CD8-positive, alpha-beta T cell (primary cell): ENCODE measurements at regions of chr17 and their contacts with region 1.

Region 1: DNA sequence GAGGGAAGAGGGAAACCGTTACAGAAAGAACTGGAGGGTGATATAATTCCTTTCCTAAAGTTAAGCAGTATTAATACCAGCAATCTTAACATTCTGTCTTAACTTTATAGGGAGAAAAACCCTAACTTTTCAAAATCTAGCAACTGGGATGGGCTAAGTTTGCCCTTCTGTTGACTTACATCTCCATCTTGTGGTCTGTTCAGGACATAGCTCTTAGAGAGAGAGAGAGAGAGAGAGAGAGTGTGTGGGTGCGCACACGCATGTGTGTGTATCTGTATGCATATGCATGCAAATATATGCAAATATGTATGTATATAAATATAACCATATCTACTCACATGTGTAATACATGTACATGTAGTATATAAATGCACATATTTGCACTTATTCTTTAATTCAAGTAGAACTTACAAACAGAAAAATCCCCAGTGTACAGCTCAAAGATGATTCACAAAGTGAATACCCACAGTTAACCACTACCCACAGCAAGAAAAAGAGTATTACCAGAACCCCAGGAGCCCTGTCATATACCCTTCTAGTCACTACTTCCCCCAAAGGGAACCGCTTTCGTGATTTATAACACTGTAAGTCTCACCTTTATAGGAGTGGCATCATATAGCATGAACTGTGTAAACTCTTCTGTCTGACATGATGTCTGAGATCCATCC is 46.5 kb downstream of the STX8 start:
- DNase-seq: peak in 2 of 9 experiments; percentile 16 to 33
- ATAC-seq: no peak
- H3K4me3 ChIP-seq: no peak overlapping the region
- H3K4me3 Mint-ChIP-seq: no peak overlapping the region
- H3K27ac ChIP-seq: no peak overlapping the region
- H3K27ac Mint-ChIP-seq: no peak overlapping the region
- H3K4me1 ChIP-seq: no peaks in the 10 kb centered on the region
- H3K4me1 Mint-ChIP-seq: no peaks in the 10 kb centered on the region
- H3K27me3 ChIP-seq: no peaks in the 10 kb centered on the region
- H3K27me3 Mint-ChIP-seq: no peaks in the 10 kb centered on the region
- CTCF ChIP-seq: no peak

Region 2: DNA sequence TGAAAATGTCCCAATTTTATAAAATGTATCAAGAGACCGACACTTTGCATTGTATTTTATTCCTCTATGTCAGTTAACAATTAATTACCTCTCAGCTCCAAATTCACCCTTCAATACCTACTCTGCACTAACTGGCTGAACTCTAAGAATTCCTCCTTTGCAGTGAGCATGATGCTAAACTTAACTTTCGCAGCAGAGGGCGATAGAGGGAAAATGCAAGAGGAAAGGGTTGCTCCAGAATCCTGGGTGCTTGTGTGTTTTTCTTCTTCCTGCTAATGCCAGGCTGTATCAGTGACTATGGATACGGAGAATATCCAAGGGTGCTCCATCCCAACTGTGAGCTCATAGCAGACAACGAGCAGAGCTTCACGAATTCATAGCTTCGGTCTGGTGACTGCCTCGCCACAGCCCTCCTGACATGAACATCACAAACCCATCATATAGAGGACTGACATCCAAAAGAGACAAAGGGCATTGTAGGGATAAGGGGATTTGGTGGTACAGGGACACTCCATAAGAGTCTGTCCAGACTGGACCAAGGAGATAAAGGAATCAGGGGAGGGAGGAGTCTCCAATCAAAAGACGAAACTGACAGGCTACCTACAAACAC is 126.5 kb before region 1 on chr17:
- CTCF ChIA-PET with region 1: no interaction called
- POLR2A ChIA-PET with region 1: no interaction called
- intact Hi-C with region 1: loop called in 1 of 2 experiments (anchors 5 kb)
- DNase-seq: peak in 2 of 9 experiments; percentile 32
- ATAC-seq: no peak
- H3K4me3 ChIP-seq: no peak overlapping the region
- H3K4me3 Mint-ChIP-seq: no peak overlapping the region
- H3K27ac ChIP-seq: no peak overlapping the region
- H3K27ac Mint-ChIP-seq: no peak overlapping the region
- H3K4me1 ChIP-seq: no peaks in the 10 kb centered on the region
- H3K4me1 Mint-ChIP-seq: no peaks in the 10 kb centered on the region
- H3K27me3 ChIP-seq: no peaks in the 10 kb centered on the region
- H3K27me3 Mint-ChIP-seq: no peaks in the 10 kb centered on the region
- CTCF ChIP-seq: no peak

Region 3: DNA sequence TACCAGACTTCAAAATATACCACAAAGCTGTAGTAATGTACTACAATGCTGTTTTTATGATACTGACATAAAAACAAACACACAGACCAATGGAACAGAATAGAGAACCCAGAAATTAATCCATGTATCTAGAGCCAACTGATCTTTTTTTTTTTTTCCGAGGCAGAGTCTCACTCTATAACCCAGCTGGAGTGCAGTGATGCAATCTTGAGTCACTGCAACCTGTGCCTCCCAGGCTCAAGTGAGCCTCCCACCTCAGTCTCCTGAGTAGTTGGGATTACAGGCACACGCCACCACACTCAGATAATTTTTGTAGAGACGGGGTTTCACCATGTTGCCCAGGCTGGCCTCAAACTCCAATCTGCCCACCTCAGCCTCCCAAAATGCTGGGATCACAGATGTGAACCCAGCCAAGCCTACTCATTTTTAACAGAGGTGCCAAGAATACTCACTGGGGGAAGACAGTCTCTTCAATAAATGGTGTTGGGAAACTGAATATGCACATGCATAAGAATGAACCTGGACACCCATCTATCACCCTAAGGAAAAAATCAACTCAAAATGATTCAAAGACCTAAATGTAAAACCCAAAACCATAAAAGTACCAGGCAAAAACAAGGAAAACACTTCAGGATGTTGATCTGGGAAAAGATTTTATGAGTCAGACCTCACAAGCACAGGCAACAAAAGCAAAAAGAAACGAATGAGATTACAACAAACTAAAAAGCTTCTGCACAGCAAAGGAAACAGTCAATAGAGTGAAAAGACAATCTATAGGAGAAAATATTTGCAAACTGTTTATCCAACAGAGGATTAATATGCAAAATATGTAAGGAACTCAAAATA is 16.6 kb before region 1 on chr17:
- CTCF ChIA-PET with region 1: no interaction called
- POLR2A ChIA-PET with region 1: no interaction called
- intact Hi-C with region 1: no loop called
- DNase-seq: no peak
- ATAC-seq: no peak
- H3K4me3 ChIP-seq: no peak overlapping the region
- H3K4me3 Mint-ChIP-seq: no peak overlapping the region
- H3K27ac ChIP-seq: no peak overlapping the region
- H3K27ac Mint-ChIP-seq: no peak overlapping the region
- H3K4me1 ChIP-seq: peaks cover 6% of the 10 kb centered on the region
- H3K4me1 Mint-ChIP-seq: peaks cover 32% of the 10 kb centered on the region
- H3K27me3 ChIP-seq: no peaks in the 10 kb centered on the region
- H3K27me3 Mint-ChIP-seq: no peaks in the 10 kb centered on the region
- CTCF ChIP-seq: no peak